HEK293 (cell line): ENCODE measurements at regions of chr15 and their contacts with region 1.

Region 1: GRCh38 chr15:57861036-57861638 is 154.6 kb downstream of the POLR2M start:
- H3K4me3 ChIP-seq: no peak overlapping the region
- H3K27ac ChIP-seq: no peak overlapping the region
- H3K4me1 ChIP-seq: no peaks in the 10 kb centered on the region
- CTCF ChIP-seq: no peak

Region 2: DNA sequence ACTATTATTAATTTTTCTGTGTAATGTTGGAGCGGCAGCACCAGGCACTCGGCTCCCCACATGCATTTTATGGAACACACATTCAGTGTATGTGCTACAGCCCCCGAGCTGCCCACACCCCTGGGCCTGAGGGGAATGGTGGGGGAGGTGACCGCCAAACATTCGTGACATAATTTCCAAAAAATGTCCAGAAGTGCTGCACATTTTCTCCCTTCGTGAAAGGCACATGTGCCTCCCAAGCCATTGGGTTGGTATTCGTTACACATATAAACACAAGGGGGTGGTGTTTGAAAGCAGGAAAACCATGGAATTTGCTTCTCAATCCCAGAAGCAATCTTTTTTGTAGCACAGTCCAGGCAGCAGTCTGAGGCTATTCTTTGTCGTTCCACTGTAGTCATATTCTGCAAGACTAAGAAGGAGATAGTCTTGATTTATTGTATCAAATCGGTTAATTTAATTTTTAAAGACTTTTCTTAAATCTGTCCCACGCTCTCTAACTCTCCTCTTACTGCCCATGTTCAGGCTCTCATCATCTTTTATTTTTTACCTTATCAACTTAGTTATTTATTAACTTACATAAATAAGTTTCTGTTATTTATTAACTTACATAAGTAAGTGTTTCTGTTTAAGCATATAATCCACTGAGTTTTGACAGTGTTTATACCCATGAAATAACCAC is 193.8 kb before region 1 on chr15:
- CTCF ChIA-PET with region 1: interaction called, 12 read pairs
- POLR2A ChIA-PET with region 1: no interaction called
- H3K4me3 ChIP-seq: no peak overlapping the region
- H3K27ac ChIP-seq: no peak overlapping the region
- H3K4me1 ChIP-seq: no peaks in the 10 kb centered on the region
- CTCF ChIP-seq: peak; percentile 18; the same call in 1 of the 2 replicates

Region 3: DNA sequence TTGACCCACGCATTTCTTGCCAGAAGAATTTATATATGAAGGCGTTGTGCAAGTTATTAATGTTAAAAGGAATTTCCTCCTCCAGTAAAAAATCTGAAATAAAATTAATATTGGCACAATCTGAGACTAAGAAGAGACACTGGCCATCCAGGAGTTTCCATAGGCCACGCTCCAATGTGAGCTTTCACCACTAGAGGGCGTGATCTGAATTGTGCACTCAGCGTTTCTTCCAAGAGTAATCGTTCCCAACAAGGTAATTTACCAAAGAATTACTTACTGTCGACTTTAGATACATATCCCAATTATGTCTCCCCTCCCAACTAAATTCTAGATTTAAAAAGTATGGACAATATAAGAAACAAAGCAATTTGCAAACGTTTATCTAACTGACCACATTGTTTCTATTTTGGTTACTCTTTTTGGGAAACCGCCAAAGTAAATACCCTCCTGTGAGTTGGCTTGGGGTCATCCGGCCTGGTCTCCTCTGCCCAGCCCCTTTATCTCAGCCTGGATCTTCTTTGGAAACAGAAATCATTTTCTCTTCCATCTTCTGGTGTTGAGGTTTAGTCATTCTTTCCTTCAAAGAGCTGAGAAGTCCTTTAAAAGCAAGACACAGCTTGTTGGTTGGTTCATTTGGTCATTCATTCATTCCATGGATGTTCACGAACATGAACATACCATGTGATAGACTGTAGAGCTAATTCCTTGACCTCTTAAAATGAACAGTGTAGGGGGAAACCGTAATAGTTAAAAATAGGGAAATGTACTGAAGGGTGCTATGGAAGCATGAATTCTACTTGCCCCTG is 128.4 kb before region 1 on chr15:
- CTCF ChIA-PET with region 1: interaction called, 12 read pairs
- POLR2A ChIA-PET with region 1: no interaction called
- H3K4me3 ChIP-seq: no peak overlapping the region
- H3K27ac ChIP-seq: no peak overlapping the region
- H3K4me1 ChIP-seq: no peaks in the 10 kb centered on the region
- CTCF ChIP-seq: peak; percentile 19; the same call in 1 of the 2 replicates

Region 4: GRCh38 chr15:57751177-57751800 is 109.8 kb before region 1 on chr15:
- CTCF ChIA-PET with region 1: interaction called, 57 read pairs
- POLR2A ChIA-PET with region 1: no interaction called
- H3K4me3 ChIP-seq: no peak overlapping the region
- H3K27ac ChIP-seq: no peak overlapping the region
- H3K4me1 ChIP-seq: peaks cover 4% of the 10 kb centered on the region; the same call in 1 of the 2 replicates
- CTCF ChIP-seq: no peak

Region 5: GRCh38 chr15:57849317-57849716 is 11.8 kb before region 1 on chr15:
- CTCF ChIA-PET with region 1: interaction called, 15 read pairs
- POLR2A ChIA-PET with region 1: no interaction called
- H3K4me3 ChIP-seq: no peak overlapping the region
- H3K27ac ChIP-seq: no peak overlapping the region
- H3K4me1 ChIP-seq: no peaks in the 10 kb centered on the region
- CTCF ChIP-seq: no peak

Region 6: DNA sequence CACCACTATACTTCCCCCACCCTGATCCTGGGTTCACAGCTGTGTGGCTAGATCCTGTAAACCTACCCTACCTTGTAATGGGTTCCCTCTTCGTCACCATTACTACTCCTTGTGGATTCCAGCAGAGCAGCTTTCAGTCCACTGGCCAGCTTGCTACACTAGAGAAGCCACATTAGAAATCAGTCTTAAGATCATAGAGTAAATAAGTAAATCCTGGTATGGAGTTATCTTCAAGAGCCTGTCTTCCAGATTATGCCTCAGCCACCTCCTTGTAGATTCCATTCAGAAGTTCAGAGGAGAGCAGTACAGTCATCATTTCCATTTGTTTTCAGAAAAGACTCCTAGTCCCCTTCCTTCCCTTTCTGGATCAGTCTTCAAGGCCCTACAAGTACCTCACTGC is 80.7 kb after region 1 on chr15:
- CTCF ChIA-PET with region 1: no interaction called
- POLR2A ChIA-PET with region 1: no interaction called
- H3K4me3 ChIP-seq: no peak overlapping the region
- H3K27ac ChIP-seq: no peak overlapping the region
- H3K4me1 ChIP-seq: no peaks in the 10 kb centered on the region
- CTCF ChIP-seq: no peak